Left ventricle myocardium inferior (tissue), 1 donor: ENCODE measurements at regions of chr16 and their contacts with region 1.

Region 1: GRCh38 chr16:228818-229730 is at the start of gene LUC7L:
- DNase-seq: peak; percentile 90
- H3K4me3 ChIP-seq: peak within 1 kb of the TSS; percentile 92
- H3K27ac ChIP-seq: peak within 1 kb of the TSS; percentile 99
- H3K4me1 ChIP-seq: peaks cover 34% of the 10 kb centered on the region
- H3K27me3 ChIP-seq: no peaks in the 10 kb centered on the region
- CTCF ChIP-seq: no peak
- total RNA-seq, gene LUC7L: 23.3 TPM

Region 2: DNA sequence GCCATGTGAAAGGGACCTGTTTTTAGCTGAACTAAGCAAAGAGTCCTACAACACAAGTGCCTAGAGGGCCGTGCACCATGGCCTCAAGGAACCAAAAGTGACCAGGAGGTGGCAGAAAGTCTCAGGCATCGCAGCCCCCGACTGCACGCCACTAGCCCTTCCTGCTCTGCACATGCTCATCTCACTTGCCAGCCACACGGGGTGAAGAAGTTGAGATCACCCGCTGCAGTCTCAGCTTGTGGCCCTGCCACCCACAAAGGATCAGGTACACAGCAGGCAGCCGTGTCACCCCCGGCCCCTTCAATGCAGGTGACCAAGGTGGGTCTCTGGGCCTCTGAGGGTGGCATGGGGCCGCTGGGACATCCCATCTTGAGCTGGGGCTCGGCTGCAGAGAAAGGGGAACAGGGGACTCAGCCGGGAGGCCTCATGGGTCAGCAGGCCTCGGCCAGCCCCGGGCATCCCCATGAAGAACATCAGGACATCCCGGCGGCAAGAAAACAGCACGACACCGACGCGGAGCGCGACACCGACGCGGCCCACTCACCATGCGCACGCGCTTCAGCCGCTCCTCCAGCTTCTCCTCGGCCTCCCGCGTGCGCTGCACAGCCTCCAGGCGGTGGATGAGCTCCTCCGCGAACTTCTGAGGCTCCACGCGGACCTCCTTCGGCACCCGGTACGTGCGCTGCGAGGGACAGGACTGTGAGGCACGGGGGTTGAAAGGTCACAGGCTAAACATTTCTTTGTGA is 74.9 kb after region 1 on chr16:
- intact Hi-C with region 1: no loop called
- DNase-seq: no peak
- H3K4me3 ChIP-seq: no peak overlapping the region
- H3K27ac ChIP-seq: no peak overlapping the region
- H3K4me1 ChIP-seq: no peaks in the 10 kb centered on the region
- H3K27me3 ChIP-seq: no peaks in the 10 kb centered on the region
- CTCF ChIP-seq: no peak

Region 3: GRCh38 chr16:352547-353403 is 123.7 kb after region 1 on chr16 and contains the start of gene AXIN1:
- intact Hi-C with region 1: loop called (anchors 10 kb)
- DNase-seq: peak; percentile 100
- H3K4me3 ChIP-seq: peak within 1 kb of the TSS; percentile 80
- H3K27ac ChIP-seq: peak within 1 kb of the TSS; percentile 77
- H3K4me1 ChIP-seq: peaks cover 14% of the 10 kb centered on the region
- H3K27me3 ChIP-seq: no peaks in the 10 kb centered on the region
- CTCF ChIP-seq: peak; percentile 66
- total RNA-seq, gene AXIN1: 12.2 TPM